Mammary epithelial cell (primary cell): ENCODE measurements at regions of chr9 and their contacts with region 1.

Region 1: GRCh38 chr9:92790542-92791527 is 26.2 kb upstream of the BICD2 start:
- DNase-seq: peak; percentile 76
- H3K4me3 ChIP-seq: no peak overlapping the region
- H3K27ac ChIP-seq: no peak overlapping the region
- H3K4me1 ChIP-seq: no peaks in the 10 kb centered on the region
- H3K27me3 ChIP-seq: no peaks in the 10 kb centered on the region
- CTCF ChIP-seq: peak; percentile 78 to 84

Region 2: DNA sequence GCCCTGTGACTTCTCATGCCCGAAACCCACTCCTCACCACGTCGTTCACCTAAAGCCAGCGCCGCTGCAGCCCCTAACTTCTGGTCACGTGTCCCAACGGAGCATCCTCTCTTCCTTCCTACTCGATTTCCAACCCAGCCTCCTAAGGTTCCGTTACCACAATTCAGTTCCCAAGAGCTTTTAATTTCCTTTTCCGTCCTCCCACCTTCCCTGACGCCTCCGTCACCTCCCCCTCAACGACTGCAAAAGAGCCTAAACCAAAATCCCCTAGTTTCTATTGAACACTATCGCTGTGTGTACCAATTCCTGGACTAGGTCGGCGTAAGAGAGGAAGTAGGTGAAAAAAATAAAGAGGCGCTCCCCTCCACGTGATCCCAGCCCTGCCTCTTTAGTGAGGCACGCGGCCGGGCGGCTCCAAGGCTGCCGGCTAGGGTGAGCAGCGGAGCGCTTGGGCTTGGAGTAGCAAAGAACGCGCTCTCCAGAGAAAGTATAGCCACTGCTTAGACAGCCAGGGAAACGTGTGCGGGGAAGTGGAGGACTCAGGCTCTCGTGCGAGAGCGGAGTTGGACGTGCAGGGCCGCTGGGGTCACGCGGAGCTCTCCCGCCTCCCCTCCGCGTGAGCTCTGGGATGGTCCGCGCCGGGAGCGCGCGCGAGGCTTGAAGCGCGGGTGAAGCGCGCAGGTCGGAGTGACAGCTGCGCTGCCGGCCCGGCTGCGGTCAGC is 465.4 kb before region 1 on chr9 and contains the starts of genes CENPP and NOL8:
- CTCF ChIA-PET with region 1: no interaction called
- dilution Hi-C with region 1: no loop called
- in situ Hi-C with region 1: loop called in 1 of 2 experiments (anchors 25 kb)
- intact Hi-C with region 1: no loop called
- DNase-seq: peak; percentile 91
- H3K4me3 ChIP-seq: peak within 1 kb of the TSS; percentile 80 to 99 (median 93)
- H3K27ac ChIP-seq: peak within 1 kb of the TSS; percentile 98
- H3K4me1 ChIP-seq: peaks cover 27% of the 10 kb centered on the region
- H3K27me3 ChIP-seq: no peaks in the 10 kb centered on the region
- CTCF ChIP-seq: no peak
- total RNA-seq, gene CENPP: 3.0 to 7.5 TPM
- total RNA-seq, gene NOL8: 21.8 to 42.4 TPM

Region 3: GRCh38 chr9:92644278-92644677 is 146.6 kb before region 1 on chr9:
- CTCF ChIA-PET with region 1: no interaction called
- dilution Hi-C with region 1: no loop called
- in situ Hi-C with region 1: loop called in 1 of 2 experiments (anchors 25 kb)
- intact Hi-C with region 1: loop called (anchors 2 kb)
- DNase-seq: no peak
- H3K4me3 ChIP-seq: no peak overlapping the region
- H3K27ac ChIP-seq: no peak overlapping the region
- H3K4me1 ChIP-seq: peaks cover 18% of the 10 kb centered on the region
- H3K27me3 ChIP-seq: no peaks in the 10 kb centered on the region
- CTCF ChIP-seq: no peak

Region 4: DNA sequence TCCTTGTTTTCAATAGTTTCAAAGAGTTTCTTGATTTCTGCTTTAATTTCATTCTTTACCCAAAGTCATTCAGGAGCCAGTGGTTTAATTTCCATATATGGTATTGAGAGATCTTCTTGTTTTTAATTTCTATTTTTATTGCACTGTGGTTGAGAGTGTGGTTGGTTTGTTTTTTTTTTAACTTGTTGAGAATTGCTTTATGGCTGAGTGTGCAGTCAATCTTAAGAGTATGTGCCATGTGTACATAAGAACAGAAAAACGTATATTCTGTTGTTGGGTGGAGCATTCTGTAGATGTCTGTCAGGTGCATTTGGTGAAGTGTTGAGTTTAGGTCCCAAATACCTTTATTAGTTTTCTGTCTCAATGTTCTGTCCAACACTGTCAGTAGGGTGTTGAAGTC is 94.2 kb before region 1 on chr9:
- CTCF ChIA-PET with region 1: no interaction called
- dilution Hi-C with region 1: no loop called
- in situ Hi-C with region 1: no loop called
- intact Hi-C with region 1: no loop called
- DNase-seq: no peak
- H3K4me3 ChIP-seq: no peak overlapping the region
- H3K27ac ChIP-seq: no peak overlapping the region
- H3K4me1 ChIP-seq: no peaks in the 10 kb centered on the region
- H3K27me3 ChIP-seq: no peaks in the 10 kb centered on the region
- CTCF ChIP-seq: no peak

Region 5: DNA sequence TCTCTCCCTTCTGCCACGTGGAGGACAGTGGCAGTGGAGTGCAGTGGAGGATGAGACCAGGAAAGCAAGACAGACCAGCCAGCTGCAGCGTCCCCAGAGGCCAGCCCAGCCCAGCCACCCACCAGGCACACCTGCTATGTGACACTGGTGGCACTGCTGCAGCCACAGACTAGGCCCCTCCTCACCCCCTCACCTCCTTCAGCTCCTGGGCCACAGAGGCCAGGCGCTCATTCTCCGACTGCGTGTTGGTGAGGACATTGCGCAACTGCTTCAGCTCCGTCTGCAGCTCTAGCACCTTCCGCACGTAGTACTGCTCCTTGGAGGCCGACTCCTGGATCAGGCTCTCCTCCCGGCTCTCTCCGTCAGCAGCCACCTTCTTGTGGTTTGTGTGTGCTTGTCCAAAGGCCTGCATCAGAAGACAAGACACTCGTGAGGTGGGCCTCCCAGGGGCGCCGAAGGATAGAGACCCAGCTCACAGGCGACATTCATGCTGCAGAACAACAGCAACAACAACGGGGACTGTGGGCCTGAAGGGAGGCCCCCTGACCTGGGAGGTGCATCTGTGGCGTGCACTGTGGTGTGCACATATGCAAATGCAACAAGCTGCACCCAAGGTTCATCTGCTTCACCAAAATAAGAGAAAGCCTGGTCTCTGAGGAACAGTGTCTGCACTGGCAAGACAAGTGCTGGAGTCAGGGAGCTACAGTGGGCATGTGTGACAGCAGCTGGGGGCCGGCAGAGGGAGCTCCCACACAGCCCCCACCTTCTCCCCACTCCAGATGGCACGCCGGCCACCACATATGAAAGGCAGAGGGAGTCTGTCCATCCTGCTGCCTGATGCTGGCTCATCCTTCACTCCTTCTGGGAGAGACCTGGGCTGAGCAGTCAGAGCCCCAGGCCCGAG is 61.8 kb before region 1 on chr9:
- CTCF ChIA-PET with region 1: no interaction called
- dilution Hi-C with region 1: loop called (anchors 5 kb)
- in situ Hi-C with region 1: no loop called
- intact Hi-C with region 1: loop called (anchors 1 kb)
- DNase-seq: no peak
- H3K4me3 ChIP-seq: no peak overlapping the region
- H3K27ac ChIP-seq: no peak overlapping the region
- H3K4me1 ChIP-seq: peaks cover 6% of the 10 kb centered on the region
- H3K27me3 ChIP-seq: no peaks in the 10 kb centered on the region
- CTCF ChIP-seq: peak; percentile 30 to 46

Region 6: GRCh38 chr9:92749071-92749933 is 41.5 kb before region 1 on chr9:
- CTCF ChIA-PET with region 1: no interaction called
- dilution Hi-C with region 1: no loop called
- in situ Hi-C with region 1: no loop called
- intact Hi-C with region 1: no loop called
- DNase-seq: no peak
- H3K4me3 ChIP-seq: no peak overlapping the region
- H3K27ac ChIP-seq: no peak overlapping the region
- H3K4me1 ChIP-seq: peaks cover 23% of the 10 kb centered on the region
- H3K27me3 ChIP-seq: no peaks in the 10 kb centered on the region
- CTCF ChIP-seq: no peak

Region 7: GRCh38 chr9:92770360-92770995 is 20.4 kb before region 1 on chr9:
- CTCF ChIA-PET with region 1: no interaction called
- dilution Hi-C with region 1: no loop called
- in situ Hi-C with region 1: no loop called
- intact Hi-C with region 1: loop called (anchors 1 kb)
- DNase-seq: peak; percentile 96
- H3K4me3 ChIP-seq: no peak overlapping the region
- H3K27ac ChIP-seq: peak overlapping the region; percentile 75
- H3K4me1 ChIP-seq: peaks cover 43% of the 10 kb centered on the region
- H3K27me3 ChIP-seq: no peaks in the 10 kb centered on the region
- CTCF ChIP-seq: no peak

Region 8: GRCh38 chr9:93592643-93593021 is 801.8 kb after region 1 on chr9:
- CTCF ChIA-PET with region 1: interaction called, 32 read pairs
- dilution Hi-C with region 1: no loop called
- in situ Hi-C with region 1: no loop called
- intact Hi-C with region 1: no loop called
- DNase-seq: no peak
- H3K4me3 ChIP-seq: no peak overlapping the region
- H3K27ac ChIP-seq: no peak overlapping the region
- H3K4me1 ChIP-seq: peaks cover 9% of the 10 kb centered on the region
- H3K27me3 ChIP-seq: no peaks in the 10 kb centered on the region
- CTCF ChIP-seq: peak in 1 of 2 donors; percentile 35